ENCODE measurements at regions of chr11 and their contacts with region 1.

Region 1: DNA sequence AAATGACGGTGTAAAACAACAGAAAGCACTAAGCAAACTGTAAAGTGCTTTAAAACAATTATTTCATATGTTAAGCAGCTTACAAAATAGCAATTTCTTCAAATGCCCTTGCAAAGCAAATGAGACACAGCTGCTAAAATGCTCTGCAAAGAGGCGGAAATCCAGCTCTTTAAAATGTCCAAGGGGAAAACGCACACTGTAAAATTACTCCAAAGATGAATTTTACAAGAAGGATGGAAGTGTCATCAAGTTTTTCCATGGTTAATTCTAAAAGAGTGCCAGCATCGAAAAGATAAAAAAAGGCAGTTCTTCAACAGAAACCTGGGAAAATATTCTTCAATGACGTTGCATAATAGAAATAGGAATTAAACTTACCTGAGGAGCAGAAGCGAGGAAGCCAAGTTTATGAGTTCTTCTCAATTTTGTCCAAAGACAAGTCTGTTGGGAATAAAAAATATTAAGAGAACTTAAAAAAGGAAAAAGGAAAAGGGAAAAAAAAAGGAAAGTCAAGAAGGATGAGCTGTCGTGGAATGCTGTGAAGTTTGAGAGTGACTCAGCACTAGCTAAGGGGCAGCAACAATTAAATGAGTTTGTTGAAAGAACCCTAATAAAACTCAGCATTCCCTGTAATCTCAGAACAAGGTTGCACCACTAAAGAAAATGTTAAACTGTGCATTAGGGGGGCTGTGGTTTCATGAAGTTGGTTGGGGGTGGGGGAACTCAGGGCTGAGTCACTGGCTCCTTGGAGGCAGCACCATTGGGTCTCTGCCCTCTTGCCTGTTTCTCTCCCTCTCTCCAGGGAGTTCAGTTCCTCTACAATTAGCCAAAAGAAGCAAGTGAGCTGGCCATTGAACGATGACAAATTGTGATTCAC is 64.2 kb upstream of the BLID start:
- DNase-seq: peak; percentile 95
- H3K4me3 ChIP-seq: peak overlapping the region; percentile 45 to 98 (median 95)
- H3K27ac ChIP-seq: peak overlapping the region; percentile 98
- H3K4me1 ChIP-seq: peaks cover 45% of the 10 kb centered on the region
- H3K27me3 ChIP-seq: no peaks in the 10 kb centered on the region
- CTCF ChIP-seq: no peak

Region 2: GRCh38 chr11:122159173-122159721 is 21.0 kb before region 1 on chr11:
- CTCF ChIA-PET with region 1: interaction called, 3 read pairs
- dilution Hi-C with region 1: no loop called
- in situ Hi-C with region 1: no loop called
- intact Hi-C with region 1: loop called (anchors 1 kb)
- DNase-seq: peak; percentile 52
- H3K4me3 ChIP-seq: peak overlapping the region; percentile 25 to 65 (median 37)
- H3K27ac ChIP-seq: peak overlapping the region; percentile 95
- H3K4me1 ChIP-seq: peaks cover 69% of the 10 kb centered on the region
- H3K27me3 ChIP-seq: no peaks in the 10 kb centered on the region
- CTCF ChIP-seq: no peak

Region 3: GRCh38 chr11:122229481-122230384 is 49.5 kb after region 1 on chr11:
- CTCF ChIA-PET with region 1: no interaction called
- dilution Hi-C with region 1: no loop called
- in situ Hi-C with region 1: no loop called
- intact Hi-C with region 1: no loop called
- DNase-seq: no peak
- H3K4me3 ChIP-seq: no peak overlapping the region
- H3K27ac ChIP-seq: no peak overlapping the region
- H3K4me1 ChIP-seq: no peaks in the 10 kb centered on the region
- H3K27me3 ChIP-seq: no peaks in the 10 kb centered on the region
- CTCF ChIP-seq: no peak

Region 4: GRCh38 chr11:122271137-122271536 is 90.9 kb after region 1 on chr11:
- CTCF ChIA-PET with region 1: no interaction called
- dilution Hi-C with region 1: no loop called
- in situ Hi-C with region 1: no loop called
- intact Hi-C with region 1: no loop called
- DNase-seq: no peak
- H3K4me3 ChIP-seq: no peak overlapping the region
- H3K27ac ChIP-seq: no peak overlapping the region
- H3K4me1 ChIP-seq: no peaks in the 10 kb centered on the region
- H3K27me3 ChIP-seq: peaks cover 4% of the 10 kb centered on the region
- CTCF ChIP-seq: no peak

Region 5: GRCh38 chr11:122293296-122294023 is 113.3 kb after region 1 on chr11:
- CTCF ChIA-PET with region 1: no interaction called
- dilution Hi-C with region 1: no loop called
- in situ Hi-C with region 1: no loop called
- intact Hi-C with region 1: no loop called
- DNase-seq: peak; percentile 5
- H3K4me3 ChIP-seq: no peak overlapping the region
- H3K27ac ChIP-seq: no peak overlapping the region
- H3K4me1 ChIP-seq: no peaks in the 10 kb centered on the region
- H3K27me3 ChIP-seq: peaks cover 4% of the 10 kb centered on the region
- CTCF ChIP-seq: peak; percentile 25 to 51